ENCODE measurements at regions of chr22 and their contacts with region 1.

Region 1: GRCh38 chr22:22884010-22884887 is 3.4 kb upstream of the IGLL5 start:
- DNase-seq: peak; percentile 43 to 87 (median 57)
- ATAC-seq: peak; percentile 90
- H3K4me3 ChIP-seq: no peak overlapping the region
- H3K4me3 Mint-ChIP-seq: no peak overlapping the region
- H3K27ac ChIP-seq: no peak overlapping the region
- H3K27ac Mint-ChIP-seq: no peak overlapping the region
- H3K4me1 ChIP-seq: peaks cover 5% of the 10 kb centered on the region
- H3K4me1 Mint-ChIP-seq: no peaks in the 10 kb centered on the region
- H3K27me3 ChIP-seq: peaks cover 0 to 4% of the 10 kb centered on the region in 2 experiments
- H3K27me3 Mint-ChIP-seq: no peaks in the 10 kb centered on the region
- CTCF ChIP-seq: peak; percentile 83

Region 2: DNA sequence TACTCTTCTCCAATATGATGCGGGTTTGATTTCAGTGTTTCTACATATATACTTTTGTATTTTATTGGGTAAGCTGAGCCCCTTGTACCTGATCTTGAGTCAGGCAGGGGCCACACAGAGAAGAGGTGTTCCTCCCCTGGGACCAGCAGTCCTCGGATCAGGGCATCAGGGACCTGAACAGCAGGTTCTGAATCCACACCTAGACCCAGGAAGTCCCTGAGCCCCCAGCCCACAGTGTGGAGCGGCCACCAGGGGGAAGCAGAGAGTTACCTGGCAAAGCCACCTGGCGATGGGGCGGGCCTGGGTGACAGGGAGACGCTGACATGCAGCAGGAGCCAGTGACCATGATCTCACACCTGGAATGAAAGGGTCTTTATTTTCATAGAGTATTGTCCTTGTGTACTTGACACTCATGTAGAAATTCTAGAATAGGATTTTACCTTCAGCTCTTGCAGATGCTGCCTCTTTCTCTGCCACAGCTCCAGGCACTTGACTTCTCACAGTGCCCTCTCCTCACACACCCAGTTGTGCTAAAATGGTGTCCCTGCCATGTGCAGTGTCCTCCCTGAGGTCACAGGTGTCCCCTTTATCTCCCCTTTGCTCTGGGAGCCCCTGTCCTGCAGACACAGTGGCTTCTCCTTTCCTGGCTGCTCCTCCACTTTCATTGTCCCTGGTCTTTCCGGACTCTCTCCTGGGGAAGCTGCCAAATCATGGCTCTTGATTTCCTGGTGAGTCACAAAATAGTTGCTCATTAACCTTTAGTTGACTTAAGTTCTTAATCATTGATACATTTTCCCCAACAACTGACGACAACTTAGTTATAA is 191.3 kb before region 1 on chr22:
- CTCF ChIA-PET with region 1: interaction called, 10 read pairs
- POLR2A ChIA-PET with region 1: no interaction called
- intact Hi-C with region 1: loop called (anchors 1 to 5 kb)
- DNase-seq: peak; percentile 56 to 80 (median 64)
- ATAC-seq: peak; percentile 80
- H3K4me3 ChIP-seq: no peak overlapping the region
- H3K4me3 Mint-ChIP-seq: no peak overlapping the region
- H3K27ac ChIP-seq: no peak overlapping the region
- H3K27ac Mint-ChIP-seq: no peak overlapping the region
- H3K4me1 ChIP-seq: no peaks in the 10 kb centered on the region
- H3K4me1 Mint-ChIP-seq: no peaks in the 10 kb centered on the region
- H3K27me3 ChIP-seq: no peaks in the 10 kb centered on the region
- H3K27me3 Mint-ChIP-seq: no peaks in the 10 kb centered on the region
- CTCF ChIP-seq: peak; percentile 79

Region 3: GRCh38 chr22:22748297-22748743 is 135.9 kb before region 1 on chr22:
- CTCF ChIA-PET with region 1: interaction called, 21 read pairs
- POLR2A ChIA-PET with region 1: interaction called, 24 read pairs
- intact Hi-C with region 1: loop called (anchors 1 to 2 kb)
- DNase-seq: peak in 8 of 14 experiments; percentile 8 to 72 (median 40)
- ATAC-seq: peak; percentile 54
- H3K4me3 ChIP-seq: no peak overlapping the region
- H3K4me3 Mint-ChIP-seq: no peak overlapping the region
- H3K27ac ChIP-seq: no peak overlapping the region
- H3K27ac Mint-ChIP-seq: no peak overlapping the region
- H3K4me1 ChIP-seq: peaks cover 19% of the 10 kb centered on the region
- H3K4me1 Mint-ChIP-seq: peaks cover 22% of the 10 kb centered on the region
- H3K27me3 ChIP-seq: peaks cover 0 to 4% of the 10 kb centered on the region in 2 experiments
- H3K27me3 Mint-ChIP-seq: peaks cover 4% of the 10 kb centered on the region
- CTCF ChIP-seq: peak; percentile 63

Region 4: GRCh38 chr22:22787786-22788459 is 96.3 kb before region 1 on chr22:
- CTCF ChIA-PET with region 1: interaction called, 23 read pairs
- POLR2A ChIA-PET with region 1: interaction called, 10 read pairs
- intact Hi-C with region 1: loop called in 1 of 2 experiments (anchors 5 kb)
- DNase-seq: peak; percentile 53 to 86 (median 65)
- ATAC-seq: peak; percentile 77
- H3K4me3 ChIP-seq: no peak overlapping the region
- H3K4me3 Mint-ChIP-seq: peak overlapping the region; percentile 18
- H3K27ac ChIP-seq: peak overlapping the region in 1 of 2 donors; percentile 71
- H3K27ac Mint-ChIP-seq: peak overlapping the region; percentile 85
- H3K4me1 ChIP-seq: peaks cover 71% of the 10 kb centered on the region
- H3K4me1 Mint-ChIP-seq: peaks cover 55% of the 10 kb centered on the region
- H3K27me3 ChIP-seq: no peaks in the 10 kb centered on the region
- H3K27me3 Mint-ChIP-seq: no peaks in the 10 kb centered on the region
- CTCF ChIP-seq: peak; percentile 84

Region 5: DNA sequence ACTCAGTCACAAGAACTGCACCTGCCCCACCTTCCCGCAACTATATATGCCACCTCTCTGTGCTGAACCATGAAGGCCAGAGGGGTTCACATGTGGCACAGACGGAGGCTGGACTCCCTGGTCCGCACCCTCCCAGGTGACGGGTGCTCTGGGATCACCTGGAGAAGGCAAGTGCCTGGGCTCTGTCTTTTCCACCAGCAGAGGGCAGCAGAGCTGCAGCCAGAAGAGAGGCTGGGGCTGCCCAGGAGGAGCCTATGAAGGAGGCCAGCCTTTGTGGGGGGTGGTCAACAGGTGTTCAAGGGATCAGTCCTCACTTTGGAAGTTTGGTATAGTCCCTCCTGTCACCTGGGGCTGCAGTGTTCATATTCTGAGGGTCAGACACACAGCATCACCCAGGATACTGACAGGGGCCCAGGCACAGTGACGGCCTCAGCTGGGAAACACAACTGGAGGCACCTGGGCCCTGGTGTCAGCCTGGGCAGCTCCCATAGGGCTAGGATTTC is 35.8 kb before region 1 on chr22:
- CTCF ChIA-PET with region 1: interaction called, 9 read pairs
- POLR2A ChIA-PET with region 1: interaction called, 4 read pairs
- intact Hi-C with region 1: loop called (anchors 2 to 5 kb)
- DNase-seq: peak; percentile 53 to 84 (median 63)
- ATAC-seq: peak; percentile 80
- H3K4me3 ChIP-seq: no peak overlapping the region
- H3K4me3 Mint-ChIP-seq: no peak overlapping the region
- H3K27ac ChIP-seq: no peak overlapping the region
- H3K27ac Mint-ChIP-seq: no peak overlapping the region
- H3K4me1 ChIP-seq: peaks cover 22% of the 10 kb centered on the region
- H3K4me1 Mint-ChIP-seq: peaks cover 64% of the 10 kb centered on the region
- H3K27me3 ChIP-seq: no peaks in the 10 kb centered on the region
- H3K27me3 Mint-ChIP-seq: no peaks in the 10 kb centered on the region
- CTCF ChIP-seq: peak; percentile 98